OCI-LY7 (cell line): ENCODE measurements at regions of chr1 and their contacts with region 1.

Region 1: DNA sequence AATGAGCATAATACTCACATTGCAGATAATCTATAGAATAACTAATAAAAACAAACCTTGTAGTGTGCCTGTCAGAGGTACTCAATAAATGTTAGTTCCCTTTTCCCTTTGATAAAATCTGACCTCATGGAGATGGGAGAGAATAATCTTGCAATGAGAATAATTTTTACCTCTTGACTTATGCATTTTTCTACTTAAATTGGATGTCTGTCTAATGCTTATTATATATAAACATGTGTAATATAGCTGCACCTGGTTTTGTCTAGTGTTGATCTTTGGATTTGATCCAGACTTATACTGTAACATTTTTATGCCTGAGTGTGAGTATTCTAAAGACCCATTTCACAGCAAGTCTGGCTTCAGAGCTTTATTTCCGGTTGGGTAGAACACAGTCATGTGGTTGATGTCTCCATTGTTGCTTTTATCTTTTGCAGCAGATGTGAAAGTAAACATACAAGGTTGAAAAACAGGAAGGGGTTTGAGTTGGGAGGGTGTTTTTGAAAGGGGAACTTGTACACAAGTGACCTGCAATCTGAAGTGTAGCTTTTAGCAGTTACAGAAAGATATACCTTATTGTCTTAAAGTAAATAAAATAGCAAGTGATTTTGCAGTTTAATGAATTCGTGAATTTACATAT is 12.4 kb downstream of the EPB41 start:
- DNase-seq: peak; percentile 92
- H3K4me3 ChIP-seq: peak overlapping the region; percentile 64
- H3K27ac ChIP-seq: peak overlapping the region; percentile 93
- H3K4me1 ChIP-seq: peaks cover 47% of the 10 kb centered on the region
- CTCF ChIP-seq: no peak

Region 2: DNA sequence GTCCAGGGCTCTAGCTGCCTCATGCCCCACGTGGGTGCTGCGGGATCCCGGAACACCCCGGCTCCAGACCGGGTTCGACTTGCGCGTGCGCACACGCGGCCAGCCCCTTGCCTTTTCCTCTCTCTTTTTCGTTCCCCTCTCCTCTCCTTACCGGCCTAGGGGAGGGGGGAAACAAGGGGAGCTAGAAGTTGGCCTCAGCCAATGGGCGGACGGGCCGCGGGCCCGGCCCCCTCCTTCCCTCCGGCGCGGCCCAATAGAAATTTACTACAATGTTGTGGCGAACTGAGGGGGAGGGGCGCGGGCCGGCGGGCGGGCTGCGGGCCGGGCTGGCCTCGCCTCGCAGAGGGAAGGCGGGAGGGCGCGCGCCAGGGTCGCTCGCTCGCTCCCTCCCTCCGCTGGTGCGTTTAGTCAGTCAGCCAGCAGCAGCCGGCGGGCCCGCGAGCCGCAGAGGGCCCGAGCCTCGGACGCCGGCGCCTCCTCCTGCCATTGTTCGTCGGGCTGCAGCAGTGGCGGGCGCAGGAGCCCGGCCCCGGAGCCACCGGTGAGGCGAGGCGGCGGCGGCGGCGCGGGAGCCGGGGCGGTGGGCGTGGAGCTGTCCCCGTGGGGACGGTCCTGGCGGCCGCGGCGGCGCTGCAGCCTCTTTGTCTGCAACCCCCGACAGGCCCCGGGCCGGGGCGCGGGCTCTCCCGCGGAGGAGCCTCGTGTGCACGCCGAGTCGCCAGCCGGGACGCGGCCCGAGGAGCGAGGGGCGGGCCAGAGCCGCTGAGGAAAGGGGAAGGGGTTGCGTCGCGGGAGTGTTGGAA is 12.3 kb before region 1 on chr1 and contains the start of gene EPB41:
- CTCF ChIA-PET with region 1: no interaction called
- POLR2A ChIA-PET with region 1: interaction called, 14 read pairs
- intact Hi-C with region 1: loop called (anchors 1 kb)
- DNase-seq: peak; percentile 97
- H3K4me3 ChIP-seq: peak within 1 kb of the TSS; percentile 92
- H3K27ac ChIP-seq: peak within 1 kb of the TSS; percentile 68
- H3K4me1 ChIP-seq: peaks cover 19% of the 10 kb centered on the region
- CTCF ChIP-seq: no peak
- total RNA-seq, gene EPB41: 103 and 109 TPM in 2 replicates